Ovary (tissue), 10 donors: ENCODE measurements at regions of chr11 and their contacts with region 1.

Region 1: DNA sequence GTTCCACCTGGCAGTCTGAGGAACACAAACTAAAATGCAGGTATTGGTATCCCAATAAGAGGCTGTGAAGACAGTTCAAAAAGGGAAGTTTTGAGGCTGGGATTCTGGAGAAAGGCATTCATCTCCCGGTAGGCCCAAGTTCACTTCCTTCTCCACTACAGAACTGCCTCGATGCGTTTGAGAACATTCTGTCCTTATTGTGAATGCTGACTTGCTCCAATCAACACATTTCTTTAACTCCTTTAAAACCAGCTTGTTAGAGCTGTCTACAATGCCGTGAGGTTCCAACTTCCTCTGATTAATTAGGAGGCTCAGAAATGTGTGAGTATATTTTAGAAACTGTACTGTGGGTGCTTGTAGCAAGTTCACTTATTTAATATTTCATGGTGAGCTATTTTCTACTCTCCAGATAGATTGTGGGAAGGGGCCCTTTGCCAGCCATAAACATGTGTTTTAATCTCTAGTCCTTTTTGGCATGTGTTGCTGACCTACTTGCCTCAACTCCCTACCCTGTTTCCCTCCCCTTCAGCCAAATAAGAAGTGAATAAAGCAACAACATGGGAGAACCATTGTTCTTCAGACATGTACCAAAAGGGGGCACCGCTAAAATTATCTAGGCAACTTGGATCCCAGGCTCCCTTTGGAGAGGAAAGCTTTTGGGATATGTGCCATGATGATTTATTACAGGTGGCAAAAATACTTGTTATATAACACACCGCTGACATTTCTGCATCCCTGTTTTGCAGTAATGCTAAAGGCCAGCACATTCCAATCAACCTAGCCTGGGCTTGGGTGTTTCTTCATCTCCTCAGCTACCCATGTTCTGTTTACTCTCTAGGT is 245.6 kb downstream of the BLID start:
- DNase-seq: peak in 2 of 5 donors; percentile 26 to 31
- H3K4me3 ChIP-seq: no peak overlapping the region
- H3K27ac ChIP-seq: peak overlapping the region in 1 of 2 donors; percentile 44
- H3K4me1 ChIP-seq: peaks cover 3% of the 10 kb centered on the region
- H3K27me3 ChIP-seq: no peaks in the 10 kb centered on the region
- CTCF ChIP-seq: no peak
- EP300 ChIP-seq: no peak
- POLR2A ChIP-seq: no peak

Region 2: DNA sequence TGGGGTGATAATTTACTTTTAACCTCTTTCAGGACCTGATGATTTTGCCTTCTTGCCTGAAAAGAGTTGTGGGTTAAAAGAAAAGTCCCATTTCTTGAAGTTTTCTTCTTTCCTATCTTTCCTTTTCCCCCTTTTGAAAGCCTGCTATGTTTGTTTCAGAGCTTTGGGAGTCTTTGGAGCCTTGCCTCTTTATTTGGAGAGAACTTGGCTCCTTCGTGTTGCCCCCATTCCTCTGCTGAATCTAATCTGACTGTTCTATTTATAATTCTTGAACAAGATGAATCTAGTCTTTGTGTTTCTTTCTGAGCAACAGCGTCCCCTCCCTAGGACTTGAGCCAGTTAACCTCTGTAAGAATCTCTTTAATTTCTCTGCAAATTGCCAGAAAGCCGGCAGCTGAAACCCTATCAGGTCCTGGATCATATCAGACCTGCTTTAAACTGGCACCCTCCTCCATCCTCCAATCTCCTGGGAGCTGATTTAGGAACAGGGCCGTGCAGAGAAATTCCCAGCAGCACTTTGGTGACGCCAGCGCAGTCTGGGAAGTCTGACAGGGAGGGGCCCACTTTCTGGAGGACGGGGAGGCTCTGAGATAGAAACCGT is 128.6 kb before region 1 on chr11:
- intact Hi-C with region 1: loop called in 1 of 4 experiments (anchors 10 kb)
- DNase-seq: peak; percentile 77 to 89 (median 88)
- H3K4me3 ChIP-seq: peak overlapping the region; percentile 12
- H3K27ac ChIP-seq: peak overlapping the region; percentile 24 to 86
- H3K4me1 ChIP-seq: peaks cover 7% of the 10 kb centered on the region
- H3K27me3 ChIP-seq: no peaks in the 10 kb centered on the region
- CTCF ChIP-seq: no peak
- EP300 ChIP-seq: peak; percentile 86
- POLR2A ChIP-seq: peak; percentile 34

Region 3: DNA sequence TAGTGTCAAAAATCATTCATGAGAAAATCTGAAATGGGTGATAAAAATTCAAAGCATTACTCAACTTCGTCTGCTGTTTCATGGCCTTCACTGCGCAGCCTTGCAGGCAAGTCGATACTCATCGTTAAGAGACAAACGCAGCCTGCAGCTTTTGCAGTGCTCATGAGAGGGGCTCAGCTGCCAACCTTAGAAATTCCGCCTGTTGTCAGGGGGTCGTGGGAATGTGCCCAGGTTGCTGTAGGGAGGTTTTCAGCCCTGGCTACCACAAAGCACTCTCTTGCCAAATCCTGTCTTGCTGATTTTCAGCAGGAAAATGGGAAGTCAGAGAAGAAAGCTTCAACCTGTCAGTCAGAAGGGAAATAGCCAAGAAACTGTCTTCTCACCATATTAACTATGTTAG is 1534.2 kb after region 1 on chr11:
- intact Hi-C with region 1: no loop called
- DNase-seq: no peak
- H3K4me3 ChIP-seq: no peak overlapping the region
- H3K27ac ChIP-seq: no peak overlapping the region
- H3K4me1 ChIP-seq: no peaks in the 10 kb centered on the region
- H3K27me3 ChIP-seq: no peaks in the 10 kb centered on the region
- CTCF ChIP-seq: no peak
- EP300 ChIP-seq: no peak
- POLR2A ChIP-seq: no peak